ENCODE measurements at regions of chr6 and their contacts with region 1.

Region 1: DNA sequence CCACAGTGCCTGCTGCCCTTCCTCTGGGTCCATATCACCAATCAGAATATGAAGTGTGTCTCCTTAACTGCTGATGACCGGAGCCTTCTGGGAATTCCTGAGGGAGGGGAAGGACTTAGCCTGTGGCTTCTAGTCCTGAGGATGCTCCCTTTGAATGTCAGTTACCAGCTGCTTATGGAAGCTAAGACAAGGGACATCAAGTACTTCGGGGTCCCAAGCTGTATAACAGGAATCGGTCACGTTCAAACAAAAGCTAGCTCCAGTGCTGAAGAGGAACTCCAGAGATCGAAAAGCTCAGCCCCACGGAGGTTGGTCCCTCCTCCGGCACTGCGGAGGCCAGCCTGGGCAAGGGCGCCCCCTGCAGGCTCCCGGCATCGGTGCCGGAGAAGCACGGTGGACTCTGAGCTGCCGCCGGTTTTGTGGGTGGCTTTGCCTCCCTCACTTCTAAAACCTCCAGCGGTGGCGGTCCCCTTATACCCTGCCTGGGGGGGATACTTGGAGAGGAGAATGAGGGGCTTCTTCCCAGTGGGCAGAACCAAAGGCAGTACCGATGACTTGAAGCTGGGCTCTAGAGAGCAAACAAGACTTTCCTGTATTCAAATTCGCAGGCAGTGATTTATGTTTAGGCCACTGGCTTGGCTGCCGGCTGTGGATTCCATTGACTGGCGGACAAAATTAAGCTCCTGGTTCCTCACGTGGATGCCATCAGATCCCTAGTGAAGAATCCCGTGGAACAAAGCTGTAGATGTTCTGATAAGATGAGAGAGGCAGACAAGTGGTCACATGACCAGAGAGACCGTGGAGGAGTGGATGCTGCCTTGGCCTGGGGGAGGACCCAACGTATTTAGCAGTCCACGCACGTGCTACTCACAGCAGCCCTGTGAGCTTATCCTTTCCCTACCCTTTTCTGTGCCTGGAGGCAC is 16.2 kb upstream of the UBR2 start:
- DNase-seq: peak; percentile 96
- H3K4me3 Mint-ChIP-seq: peak overlapping the region; percentile 68
- H3K27ac Mint-ChIP-seq: peak overlapping the region; percentile 58
- H3K4me1 Mint-ChIP-seq: peaks cover 11% of the 10 kb centered on the region
- H3K27me3 Mint-ChIP-seq: no peaks in the 10 kb centered on the region
- CTCF ChIP-seq: peak; percentile 97

Region 2: GRCh38 chr6:42217519-42218367 is 329.9 kb before region 1 on chr6 and contains the start of gene MRPS10:
- CTCF ChIA-PET with region 1: interaction called, 11 read pairs
- intact Hi-C with region 1: no loop called
- DNase-seq: peak; percentile 95
- H3K4me3 Mint-ChIP-seq: peak within 1 kb of the TSS; percentile 96
- H3K27ac Mint-ChIP-seq: peak within 1 kb of the TSS; percentile 99
- H3K4me1 Mint-ChIP-seq: peaks cover 33% of the 10 kb centered on the region
- H3K27me3 Mint-ChIP-seq: no peaks in the 10 kb centered on the region
- CTCF ChIP-seq: no peak
- total RNA-seq, gene MRPS10: 48.1 and 50.0 TPM in 2 replicates

Region 3: DNA sequence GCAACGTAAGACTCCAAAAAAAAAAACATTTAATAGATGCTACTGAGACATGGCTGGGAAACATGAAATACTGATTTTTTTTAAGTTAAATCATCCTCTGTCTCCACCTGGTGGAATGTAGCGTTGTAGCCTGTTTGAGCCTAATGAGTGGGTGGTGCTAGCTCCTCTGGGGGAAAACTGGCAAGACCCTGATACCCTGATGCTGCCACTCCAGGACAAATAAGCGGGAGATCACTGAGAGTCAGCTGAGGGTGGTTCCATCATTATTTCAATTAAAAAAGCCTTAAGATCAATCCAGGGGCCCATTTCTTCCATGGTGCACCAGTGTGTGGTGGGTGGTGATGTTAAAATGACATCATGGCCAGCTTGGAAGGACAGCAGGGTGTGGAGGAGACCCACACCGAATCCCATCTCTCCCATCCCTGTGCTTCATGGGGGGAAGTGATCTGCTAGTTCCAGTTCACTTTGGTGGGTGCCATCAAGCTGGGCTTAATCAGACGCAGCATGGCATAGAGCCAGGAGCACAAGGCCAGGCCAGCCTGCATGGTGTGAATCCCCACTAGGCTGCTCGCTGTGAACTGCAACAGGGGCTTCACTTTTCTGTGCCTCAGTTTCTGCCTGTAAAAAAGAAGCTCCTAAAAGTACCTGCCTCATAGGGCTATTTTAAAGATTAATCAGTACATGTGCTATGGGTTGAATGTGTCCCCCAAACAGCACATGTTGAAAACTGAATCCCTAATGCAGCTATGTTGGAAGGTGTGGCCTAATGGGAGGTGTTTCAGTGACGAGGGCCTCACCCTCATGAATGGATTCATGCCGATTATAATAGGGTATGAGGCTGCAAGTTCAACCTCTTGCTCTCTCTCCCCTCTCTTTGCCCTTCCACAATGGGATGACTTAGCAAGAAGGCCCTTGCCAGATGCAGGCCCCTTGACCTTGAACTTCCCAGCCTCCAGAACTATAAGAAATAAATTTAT is 317.0 kb before region 1 on chr6:
- CTCF ChIA-PET with region 1: interaction called, 15 read pairs
- intact Hi-C with region 1: no loop called
- DNase-seq: peak; percentile 33
- H3K4me3 Mint-ChIP-seq: no peak overlapping the region
- H3K27ac Mint-ChIP-seq: no peak overlapping the region
- H3K4me1 Mint-ChIP-seq: peaks cover 51% of the 10 kb centered on the region
- H3K27me3 Mint-ChIP-seq: no peaks in the 10 kb centered on the region
- CTCF ChIP-seq: peak; percentile 82

Region 4: DNA sequence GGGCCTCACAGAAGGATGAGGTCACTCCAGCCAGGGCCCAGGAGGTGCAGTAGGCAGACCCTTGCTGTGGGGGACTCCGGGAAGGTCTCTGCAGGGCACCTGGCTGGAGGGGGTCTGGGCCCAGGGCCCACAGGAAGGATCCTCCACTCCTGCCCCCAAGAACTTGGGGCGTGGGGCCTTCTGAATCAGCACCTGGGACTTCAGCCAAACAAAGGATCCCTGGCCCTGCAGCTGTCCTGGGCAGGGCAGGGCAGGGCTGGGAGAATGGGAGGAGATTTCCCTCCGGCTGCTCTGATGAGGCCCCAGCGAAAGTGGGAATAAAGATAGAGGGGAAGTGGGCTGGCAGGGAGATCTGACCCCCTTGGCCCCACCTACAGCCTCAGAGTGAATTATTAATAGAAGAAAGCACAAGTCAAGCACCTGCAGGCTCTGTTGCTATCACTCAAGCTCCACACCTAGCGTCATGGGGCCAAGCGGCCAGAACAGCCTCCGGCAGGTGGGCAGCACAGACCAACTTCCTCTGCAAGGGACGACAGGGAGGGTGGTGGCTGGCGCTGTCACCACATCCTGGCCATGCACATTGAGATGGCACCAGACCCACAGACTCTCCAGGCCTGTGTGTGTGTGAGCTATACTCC is 268.4 kb before region 1 on chr6:
- CTCF ChIA-PET with region 1: interaction called, 10 read pairs
- intact Hi-C with region 1: no loop called
- DNase-seq: peak; percentile 58
- H3K4me3 Mint-ChIP-seq: peak overlapping the region; percentile 39
- H3K27ac Mint-ChIP-seq: peak overlapping the region; percentile 45
- H3K4me1 Mint-ChIP-seq: peaks cover 30% of the 10 kb centered on the region
- H3K27me3 Mint-ChIP-seq: no peaks in the 10 kb centered on the region
- CTCF ChIP-seq: no peak

Region 5: GRCh38 chr6:42471142-42471541 is 76.5 kb before region 1 on chr6:
- CTCF ChIA-PET with region 1: no interaction called
- intact Hi-C with region 1: no loop called
- DNase-seq: no peak
- H3K4me3 Mint-ChIP-seq: no peak overlapping the region
- H3K27ac Mint-ChIP-seq: no peak overlapping the region
- H3K4me1 Mint-ChIP-seq: no peaks in the 10 kb centered on the region
- H3K27me3 Mint-ChIP-seq: peaks cover 13% of the 10 kb centered on the region
- CTCF ChIP-seq: no peak

Region 6: GRCh38 chr6:42563697-42564505 is 16.2 kb after region 1 on chr6 and contains the start of gene UBR2:
- CTCF ChIA-PET with region 1: interaction called, 27 read pairs
- intact Hi-C with region 1: no loop called
- DNase-seq: peak; percentile 99
- H3K4me3 Mint-ChIP-seq: peak within 1 kb of the TSS; percentile 83
- H3K27ac Mint-ChIP-seq: peak within 1 kb of the TSS; percentile 70
- H3K4me1 Mint-ChIP-seq: peaks cover 17% of the 10 kb centered on the region
- H3K27me3 Mint-ChIP-seq: no peaks in the 10 kb centered on the region
- CTCF ChIP-seq: peak; percentile 55
- total RNA-seq, gene UBR2: 32.4 and 32.9 TPM in 2 replicates

Measured in Calu3 (cell line).